ENCODE measurements at regions of chr22 and their contacts with region 1.

Region 1: GRCh38 chr22:17171313-17172171 is 12.5 kb upstream of the HDHD5 start:
- DNase-seq: peak; percentile 86
- ATAC-seq: peak; percentile 93
- H3K4me3 Mint-ChIP-seq: peak overlapping the region; percentile 73
- H3K27ac Mint-ChIP-seq: peak overlapping the region; percentile 68
- H3K4me1 Mint-ChIP-seq: peaks cover 5% of the 10 kb centered on the region
- H3K27me3 Mint-ChIP-seq: no peaks in the 10 kb centered on the region
- CTCF ChIP-seq: peak; percentile 83

Region 2: DNA sequence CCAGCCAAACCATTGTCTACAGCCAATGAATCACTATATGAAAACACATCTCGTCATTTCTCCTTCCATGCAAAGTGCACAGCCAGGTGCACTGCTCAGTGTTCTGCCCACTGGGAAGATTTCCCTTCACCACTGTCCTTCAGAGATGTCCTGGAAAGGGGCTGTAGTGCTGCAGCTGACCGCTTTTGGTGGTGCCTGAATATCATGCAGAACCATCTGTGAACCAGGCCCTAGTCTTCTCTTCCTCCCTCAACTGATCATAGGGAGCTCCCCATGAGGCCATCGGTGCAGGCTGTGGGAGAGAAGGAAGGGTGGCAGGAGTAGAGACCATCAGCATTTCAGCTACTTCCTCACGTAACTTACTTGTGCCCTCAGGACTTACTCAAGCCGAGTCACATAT is 233.7 kb before region 1 on chr22:
- CTCF ChIA-PET with region 1: no interaction called
- POLR2A ChIA-PET with region 1: no interaction called
- intact Hi-C with region 1: no loop called
- DNase-seq: no peak
- ATAC-seq: no peak
- H3K4me3 Mint-ChIP-seq: no peak overlapping the region
- H3K27ac Mint-ChIP-seq: no peak overlapping the region
- H3K4me1 Mint-ChIP-seq: no peaks in the 10 kb centered on the region
- H3K27me3 Mint-ChIP-seq: peaks cover 5% of the 10 kb centered on the region
- CTCF ChIP-seq: no peak

Region 3: DNA sequence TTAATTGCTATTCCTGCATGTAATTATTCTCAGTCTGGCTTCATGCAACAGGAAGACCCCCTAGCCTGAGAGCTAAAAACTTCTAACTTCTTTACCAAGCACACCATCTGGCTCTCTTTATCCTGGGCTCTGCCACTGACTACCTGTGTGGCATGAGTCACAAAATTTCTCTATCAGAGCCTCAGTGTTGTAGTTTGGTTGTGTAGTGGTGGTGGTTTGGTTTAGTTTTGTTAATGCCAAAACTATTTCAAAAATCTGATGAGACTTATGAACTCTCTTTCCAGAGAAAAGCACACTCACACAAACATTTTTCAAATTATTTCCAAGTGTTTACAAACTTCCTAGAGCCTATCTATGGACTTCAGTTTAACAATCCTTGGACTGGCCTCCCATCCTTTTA is 94.3 kb before region 1 on chr22:
- CTCF ChIA-PET with region 1: interaction called, 94 read pairs
- POLR2A ChIA-PET with region 1: no interaction called
- intact Hi-C with region 1: loop called (anchors 5 kb)
- DNase-seq: no peak
- ATAC-seq: no peak
- H3K4me3 Mint-ChIP-seq: no peak overlapping the region
- H3K27ac Mint-ChIP-seq: no peak overlapping the region
- H3K4me1 Mint-ChIP-seq: peaks cover 18% of the 10 kb centered on the region
- H3K27me3 Mint-ChIP-seq: peaks cover 7% of the 10 kb centered on the region
- CTCF ChIP-seq: no peak

Region 4: GRCh38 chr22:17158568-17159503 is 12.7 kb before region 1 on chr22 and contains the start of gene HDHD5:
- CTCF ChIA-PET with region 1: interaction called, 114 read pairs
- POLR2A ChIA-PET with region 1: interaction called, 7 read pairs
- intact Hi-C with region 1: no loop called
- DNase-seq: peak; percentile 93
- ATAC-seq: peak; percentile 86
- H3K4me3 Mint-ChIP-seq: peak within 1 kb of the TSS; percentile 80
- H3K27ac Mint-ChIP-seq: peak within 1 kb of the TSS; percentile 89
- H3K4me1 Mint-ChIP-seq: peaks cover 31% of the 10 kb centered on the region
- H3K27me3 Mint-ChIP-seq: no peaks in the 10 kb centered on the region
- CTCF ChIP-seq: no peak
- total RNA-seq, gene HDHD5: 68.1 to 71.4 TPM

Region 5: DNA sequence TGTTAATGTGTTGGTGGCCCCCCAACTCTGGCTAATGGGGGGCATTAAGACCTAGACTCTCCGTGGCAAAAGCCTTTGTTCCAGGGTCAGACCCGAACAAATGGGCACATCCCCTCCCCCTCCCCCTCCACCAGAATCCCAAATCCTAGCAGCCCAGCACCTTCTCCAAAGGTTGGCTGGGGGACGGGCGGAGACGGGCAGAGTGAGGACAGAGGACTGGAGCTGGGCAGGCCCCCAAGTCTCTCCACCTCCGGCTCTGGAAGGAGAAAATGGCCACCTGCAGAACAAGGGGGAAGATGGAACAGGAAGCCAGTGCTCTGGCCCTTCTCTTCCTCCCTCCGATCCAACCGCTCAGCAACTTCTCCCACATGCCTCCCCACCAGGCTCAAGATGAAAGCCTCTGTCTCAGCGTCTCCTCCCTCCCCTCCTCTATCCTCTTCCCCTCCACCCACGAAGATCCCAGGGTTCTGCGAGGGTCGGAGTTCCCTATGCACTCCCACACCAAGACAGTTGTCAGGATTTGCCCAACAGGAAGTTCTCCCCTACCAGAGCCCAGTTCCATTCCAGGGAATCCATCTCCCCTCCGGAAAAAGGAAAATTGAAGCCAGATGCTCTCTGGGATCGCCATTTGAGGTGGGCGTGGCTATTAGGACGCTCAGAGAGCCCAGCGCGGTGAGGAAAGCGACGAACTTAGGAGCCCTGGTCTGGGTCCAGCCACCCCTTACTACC is 27.6 kb after region 1 on chr22:
- CTCF ChIA-PET with region 1: interaction called, 11 read pairs
- POLR2A ChIA-PET with region 1: interaction called, 3 read pairs
- intact Hi-C with region 1: no loop called
- DNase-seq: no peak
- ATAC-seq: no peak
- H3K4me3 Mint-ChIP-seq: no peak overlapping the region
- H3K27ac Mint-ChIP-seq: no peak overlapping the region
- H3K4me1 Mint-ChIP-seq: peaks cover 8% of the 10 kb centered on the region
- H3K27me3 Mint-ChIP-seq: no peaks in the 10 kb centered on the region
- CTCF ChIP-seq: no peak

Region 6: DNA sequence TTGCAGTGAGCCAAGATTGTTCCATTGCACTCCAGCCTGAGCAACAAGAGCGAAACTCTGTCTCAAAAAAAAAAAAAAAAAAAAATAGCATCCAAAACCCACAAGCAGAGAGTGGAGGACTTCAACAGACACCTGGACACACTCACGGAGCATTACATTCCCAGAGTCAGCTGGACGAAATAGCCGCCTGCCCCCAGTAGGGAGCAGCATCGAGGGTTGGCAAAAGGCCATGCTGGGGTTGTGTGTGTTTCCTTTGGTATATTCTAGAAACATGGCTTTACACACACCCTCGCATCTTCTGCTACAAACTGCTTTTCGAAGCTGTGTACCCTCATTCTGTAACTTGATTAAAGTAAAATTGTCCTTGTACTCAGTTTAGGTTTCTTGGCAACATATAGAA is 42.4 kb after region 1 on chr22:
- CTCF ChIA-PET with region 1: interaction called, 13 read pairs
- POLR2A ChIA-PET with region 1: interaction called, 5 read pairs
- intact Hi-C with region 1: no loop called
- DNase-seq: peak; percentile 67
- ATAC-seq: peak; percentile 42
- H3K4me3 Mint-ChIP-seq: no peak overlapping the region
- H3K27ac Mint-ChIP-seq: peak overlapping the region; percentile 70
- H3K4me1 Mint-ChIP-seq: peaks cover 41% of the 10 kb centered on the region
- H3K27me3 Mint-ChIP-seq: no peaks in the 10 kb centered on the region
- CTCF ChIP-seq: peak; percentile 47